ENCODE measurements at regions of chr1 and their contacts with region 1.

Region 1: DNA sequence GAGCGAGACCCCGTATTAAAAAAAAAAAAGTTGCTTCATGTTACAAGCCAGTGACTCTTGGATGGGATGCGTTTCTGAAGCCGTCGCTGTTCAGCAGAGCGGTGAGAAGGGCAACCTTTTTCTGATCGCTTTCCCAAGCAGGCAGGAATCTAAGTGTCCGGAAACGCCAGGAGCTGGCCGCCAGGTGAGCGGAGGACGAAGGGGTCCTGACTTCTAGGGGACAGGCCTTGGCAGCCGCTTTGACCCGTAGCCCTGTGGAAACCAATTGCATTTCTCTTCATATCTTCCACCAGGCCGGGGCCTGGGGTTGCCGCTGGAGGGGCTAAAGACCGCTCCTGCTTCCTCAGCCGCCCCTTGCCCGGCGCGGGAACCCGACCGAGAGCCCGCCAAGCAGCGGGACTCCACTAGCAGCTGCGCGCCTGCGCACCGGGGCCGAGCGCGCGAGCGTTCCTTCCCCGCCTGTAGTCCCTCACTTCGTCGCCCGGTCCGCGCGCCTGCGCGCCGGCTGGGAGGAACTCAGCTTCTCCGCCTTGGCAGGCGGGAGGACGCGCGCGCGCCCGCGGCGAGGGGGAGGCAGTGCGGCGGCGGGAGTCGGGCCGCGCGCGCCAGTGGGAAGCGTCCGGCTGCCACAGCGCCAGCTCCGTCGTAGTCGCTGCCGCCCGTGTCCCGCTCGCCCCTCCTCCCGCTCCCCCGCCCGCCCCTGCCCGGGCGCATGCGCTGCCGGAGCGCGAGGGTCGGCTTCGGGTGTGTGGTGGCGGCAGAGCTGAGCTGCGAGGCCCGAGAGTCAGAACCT is at the start of gene SPEN:
- DNase-seq: peak; percentile 99
- ATAC-seq: peak; percentile 95
- total RNA-seq, gene SPEN: 20.3 TPM

Region 2: DNA sequence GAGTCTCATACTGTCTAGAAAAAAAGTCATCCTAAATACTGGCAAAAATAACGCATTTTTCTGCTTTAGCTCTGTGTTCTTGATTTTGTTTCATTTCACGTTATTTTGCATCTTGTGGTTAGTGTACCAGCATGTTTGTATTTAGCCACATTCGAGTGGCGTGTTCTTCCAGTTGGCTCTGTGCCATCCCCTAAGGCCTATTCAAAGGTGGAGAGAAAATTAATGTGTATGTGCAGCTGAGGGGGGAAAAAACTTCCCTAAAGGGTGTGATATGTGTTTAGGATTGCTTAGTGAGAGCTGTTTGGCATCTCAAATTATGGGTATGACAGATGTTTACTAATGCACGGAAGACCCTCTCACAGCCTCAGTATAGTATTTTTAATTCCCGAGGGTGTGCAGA is 308.5 kb before region 1 on chr1:
- intact Hi-C with region 1: no loop called
- DNase-seq: no peak
- ATAC-seq: no peak

Region 3: GRCh38 chr1:15835741-15836510 is 11.4 kb before region 1 on chr1:
- intact Hi-C with region 1: loop called (anchors 2 kb)
- DNase-seq: peak; percentile 100
- ATAC-seq: peak; percentile 90

Region 4: DNA sequence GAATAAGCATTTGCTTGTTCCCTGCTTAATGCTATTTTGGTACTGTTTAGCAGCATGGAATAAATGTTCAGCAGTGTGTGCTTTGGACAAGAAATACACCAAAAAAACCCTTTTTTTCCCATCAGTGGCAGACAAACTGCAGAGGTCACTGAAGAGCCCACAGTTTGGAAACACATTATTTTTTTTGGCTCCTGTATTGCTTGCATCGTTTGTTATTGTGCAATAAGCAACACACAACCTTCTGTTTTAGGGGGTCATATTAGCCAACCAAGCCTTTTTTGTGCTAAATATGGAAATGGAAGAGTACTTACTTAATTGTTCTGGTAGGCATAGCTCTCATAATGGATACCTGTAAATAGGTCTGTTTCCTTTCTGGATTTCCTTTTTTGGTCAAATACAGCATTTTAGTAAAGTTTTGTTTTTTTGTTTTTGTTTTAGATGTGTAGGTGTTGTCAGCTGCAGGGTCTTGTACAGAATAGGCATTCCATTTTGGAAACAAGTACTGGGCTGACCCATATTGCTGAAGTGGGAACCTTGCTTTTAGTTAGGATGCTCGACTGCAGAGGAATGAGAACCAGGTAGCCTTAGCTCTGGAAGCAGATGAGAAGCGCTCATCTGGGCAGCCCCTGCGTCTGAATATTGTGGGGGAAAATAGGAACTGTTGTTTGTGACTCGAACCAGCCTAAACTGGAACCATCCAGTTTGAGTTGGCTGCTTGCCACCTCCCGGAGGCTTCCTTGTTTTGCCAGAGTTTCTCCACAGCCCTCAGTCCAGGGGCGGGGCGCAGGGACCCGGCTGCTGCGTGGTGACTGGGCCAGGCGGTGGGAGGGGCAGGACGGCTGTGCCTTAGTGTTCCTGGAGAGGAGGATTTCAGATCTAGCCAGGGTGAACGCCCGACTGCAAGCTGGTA is 38.7 kb after region 1 on chr1:
- intact Hi-C with region 1: loop called (anchors 5 kb)
- DNase-seq: peak; percentile 98
- ATAC-seq: peak; percentile 97

Region 5: GRCh38 chr1:15985611-15986297 is 138.5 kb after region 1 on chr1:
- intact Hi-C with region 1: no loop called
- DNase-seq: no peak
- ATAC-seq: no peak